B cell (primary cell): ENCODE measurements at regions of chr6 and their contacts with region 1.

Region 1: DNA sequence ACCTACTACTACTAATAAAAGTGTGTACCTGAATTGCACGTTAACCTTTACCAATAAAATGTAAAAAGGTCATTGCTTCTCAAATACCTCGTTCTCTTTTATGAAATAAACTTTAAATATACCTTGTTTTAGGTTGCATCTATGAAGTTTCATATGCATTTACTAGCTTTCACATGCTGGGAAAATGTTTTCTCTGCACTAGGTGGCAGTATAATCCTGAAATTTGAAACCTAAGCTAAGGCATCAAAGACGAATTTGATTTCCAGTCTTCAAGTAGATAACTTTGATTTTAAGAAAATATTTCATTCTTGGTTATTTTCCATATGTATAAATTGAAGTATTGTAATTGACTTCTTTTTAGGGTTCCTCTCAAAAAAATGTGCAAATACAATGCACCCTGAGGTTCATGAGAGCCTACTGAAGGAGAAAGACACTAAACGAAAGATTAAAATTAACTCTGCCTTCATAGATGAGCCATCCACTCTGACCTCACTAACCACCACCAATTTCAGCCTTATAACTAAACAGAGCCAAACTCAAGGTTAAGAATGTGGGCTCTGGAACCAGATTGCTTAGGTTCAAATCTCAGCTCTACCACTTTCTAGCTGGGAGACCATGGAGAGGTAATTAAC is 7.3 kb upstream of the COL9A1 start:
- DNase-seq: peak; percentile 38
- ATAC-seq: no peak
- H3K4me3 ChIP-seq: no peak overlapping the region
- H3K4me3 Mint-ChIP-seq: no peak overlapping the region
- H3K27ac ChIP-seq: no peak overlapping the region
- H3K27ac Mint-ChIP-seq: no peak overlapping the region
- H3K4me1 ChIP-seq: no peaks in the 10 kb centered on the region
- H3K4me1 Mint-ChIP-seq: no peaks in the 10 kb centered on the region
- H3K27me3 ChIP-seq: peaks cover 0 to 3% (median 0%) of the 10 kb centered on the region in 4 experiments
- H3K27me3 Mint-ChIP-seq: peaks cover 36% of the 10 kb centered on the region
- CTCF ChIP-seq: peak; percentile 77

Region 2: GRCh38 chr6:70258483-70258882 is 51.7 kb before region 1 on chr6:
- CTCF ChIA-PET with region 1: no interaction called
- POLR2A ChIA-PET with region 1: no interaction called
- intact Hi-C with region 1: no loop called
- DNase-seq: no peak
- ATAC-seq: no peak
- H3K4me3 ChIP-seq: no peak overlapping the region
- H3K4me3 Mint-ChIP-seq: no peak overlapping the region
- H3K27ac ChIP-seq: no peak overlapping the region
- H3K27ac Mint-ChIP-seq: no peak overlapping the region
- H3K4me1 ChIP-seq: no peaks in the 10 kb centered on the region
- H3K4me1 Mint-ChIP-seq: no peaks in the 10 kb centered on the region
- H3K27me3 ChIP-seq: peaks cover 0 to 7% (median 1%) of the 10 kb centered on the region in 4 experiments
- H3K27me3 Mint-ChIP-seq: peaks cover 16% of the 10 kb centered on the region
- CTCF ChIP-seq: no peak

Region 3: DNA sequence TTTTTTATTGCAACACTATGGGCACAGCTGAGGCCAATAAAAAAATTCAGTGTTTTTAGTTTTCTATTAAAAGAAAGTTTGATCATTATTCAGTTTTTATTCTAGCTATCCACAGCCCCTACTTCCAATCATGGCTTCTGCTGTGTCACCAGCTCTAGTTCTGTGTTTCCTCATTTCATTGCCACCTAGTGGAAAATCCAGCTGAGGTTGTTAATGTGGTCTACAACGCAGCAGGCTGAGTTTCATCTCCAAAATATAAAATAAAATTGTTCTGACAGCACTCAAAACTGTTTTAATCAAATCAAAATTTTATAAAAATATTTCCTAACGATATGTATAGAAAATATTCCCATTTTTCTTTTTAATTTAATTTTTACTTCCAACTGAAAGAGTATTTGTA is 20.9 kb before region 1 on chr6:
- CTCF ChIA-PET with region 1: interaction called, 10 read pairs
- POLR2A ChIA-PET with region 1: no interaction called
- intact Hi-C with region 1: no loop called
- DNase-seq: no peak
- ATAC-seq: no peak
- H3K4me3 ChIP-seq: no peak overlapping the region
- H3K4me3 Mint-ChIP-seq: no peak overlapping the region
- H3K27ac ChIP-seq: no peak overlapping the region
- H3K27ac Mint-ChIP-seq: no peak overlapping the region
- H3K4me1 ChIP-seq: no peaks in the 10 kb centered on the region
- H3K4me1 Mint-ChIP-seq: no peaks in the 10 kb centered on the region
- H3K27me3 ChIP-seq: no peaks in the 10 kb centered on the region
- H3K27me3 Mint-ChIP-seq: peaks cover 11% of the 10 kb centered on the region
- CTCF ChIP-seq: no peak

Region 4: DNA sequence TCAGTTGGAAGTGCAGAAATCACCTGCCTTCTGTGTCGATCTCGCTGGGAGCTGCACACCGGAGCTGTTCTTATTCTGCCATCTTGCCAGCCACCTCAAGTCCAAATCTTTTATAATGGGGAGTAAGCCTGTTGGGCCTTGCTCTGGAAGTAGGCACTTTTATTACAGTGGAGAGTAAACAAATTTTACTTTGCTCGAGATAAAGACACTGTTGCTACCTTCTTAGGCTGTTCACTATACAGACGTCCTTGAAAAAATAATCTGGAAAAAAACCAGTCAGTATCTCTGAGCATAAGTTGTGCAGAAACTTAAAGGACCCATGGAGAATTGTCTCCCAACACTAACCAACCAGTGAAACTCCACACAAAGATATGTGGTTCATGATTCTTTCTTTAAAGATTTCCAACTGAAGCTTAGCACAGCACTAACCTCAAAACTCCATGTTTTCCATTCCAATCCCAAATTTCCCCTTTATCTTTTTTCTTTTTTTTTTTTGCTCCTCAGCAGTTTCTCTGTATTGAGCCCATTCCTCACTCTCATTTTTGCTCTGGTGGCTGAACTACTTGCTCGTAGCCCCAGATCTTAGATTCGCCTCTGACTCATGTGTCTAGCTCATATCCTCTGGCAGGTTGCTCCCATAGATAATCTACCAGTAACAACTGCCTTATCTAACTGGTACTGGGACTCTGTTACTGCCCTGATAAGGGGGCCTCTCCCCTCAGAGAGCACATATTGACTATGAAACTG is 27.0 kb after region 1 on chr6:
- CTCF ChIA-PET with region 1: no interaction called
- POLR2A ChIA-PET with region 1: no interaction called
- intact Hi-C with region 1: no loop called
- DNase-seq: no peak
- ATAC-seq: no peak
- H3K4me3 ChIP-seq: no peak overlapping the region
- H3K4me3 Mint-ChIP-seq: no peak overlapping the region
- H3K27ac ChIP-seq: no peak overlapping the region
- H3K27ac Mint-ChIP-seq: no peak overlapping the region
- H3K4me1 ChIP-seq: no peaks in the 10 kb centered on the region
- H3K4me1 Mint-ChIP-seq: no peaks in the 10 kb centered on the region
- H3K27me3 ChIP-seq: peaks cover 0 to 5% (median 0%) of the 10 kb centered on the region in 4 experiments
- H3K27me3 Mint-ChIP-seq: peaks cover 26% of the 10 kb centered on the region
- CTCF ChIP-seq: no peak

Region 5: DNA sequence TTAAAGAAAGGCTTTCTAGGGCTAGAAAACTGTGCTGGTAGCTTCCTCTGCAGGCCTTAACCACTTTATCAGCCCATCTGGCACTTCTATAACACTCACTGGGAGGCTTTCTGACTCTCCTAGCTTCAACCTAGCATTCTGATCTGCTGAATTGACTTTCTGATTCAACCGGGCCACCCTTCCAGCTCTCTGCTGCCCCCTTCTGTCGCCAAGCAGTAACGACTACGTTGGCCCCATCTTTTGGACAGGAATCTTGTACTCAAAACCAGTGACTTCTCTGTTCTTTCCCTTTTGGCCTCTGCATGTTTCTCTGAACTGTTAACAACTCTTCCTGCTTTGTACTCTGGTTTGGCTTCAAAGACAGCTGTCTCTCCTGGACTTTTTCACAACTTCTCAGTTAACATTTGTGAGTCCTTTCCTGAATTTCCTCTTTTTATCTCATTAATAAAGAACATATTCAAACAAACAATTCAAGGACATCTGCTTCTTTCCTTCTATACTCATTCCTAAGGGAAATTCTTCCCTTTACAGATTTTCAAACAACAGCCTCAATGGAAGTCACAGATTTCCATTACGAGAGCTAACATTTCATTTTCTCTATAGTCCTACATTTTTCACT is 59.3 kb after region 1 on chr6:
- CTCF ChIA-PET with region 1: interaction called, 30 read pairs
- POLR2A ChIA-PET with region 1: no interaction called
- intact Hi-C with region 1: loop called (anchors 2 kb)
- DNase-seq: peak; percentile 73
- ATAC-seq: peak; percentile 78
- H3K4me3 ChIP-seq: no peak overlapping the region
- H3K4me3 Mint-ChIP-seq: no peak overlapping the region
- H3K27ac ChIP-seq: no peak overlapping the region
- H3K27ac Mint-ChIP-seq: no peak overlapping the region
- H3K4me1 ChIP-seq: no peaks in the 10 kb centered on the region
- H3K4me1 Mint-ChIP-seq: peaks cover 4% of the 10 kb centered on the region
- H3K27me3 ChIP-seq: peaks cover 0 to 2% (median 0%) of the 10 kb centered on the region in 4 experiments
- H3K27me3 Mint-ChIP-seq: peaks cover 32% of the 10 kb centered on the region
- CTCF ChIP-seq: peak; percentile 84

Region 6: GRCh38 chr6:70622461-70622860 is 312.3 kb after region 1 on chr6:
- CTCF ChIA-PET with region 1: no interaction called
- POLR2A ChIA-PET with region 1: no interaction called
- intact Hi-C with region 1: no loop called
- DNase-seq: no peak
- ATAC-seq: no peak
- H3K4me3 ChIP-seq: no peak overlapping the region
- H3K4me3 Mint-ChIP-seq: no peak overlapping the region
- H3K27ac ChIP-seq: no peak overlapping the region
- H3K27ac Mint-ChIP-seq: no peak overlapping the region
- H3K4me1 ChIP-seq: no peaks in the 10 kb centered on the region
- H3K4me1 Mint-ChIP-seq: no peaks in the 10 kb centered on the region
- H3K27me3 ChIP-seq: no peaks in the 10 kb centered on the region
- H3K27me3 Mint-ChIP-seq: no peaks in the 10 kb centered on the region
- CTCF ChIP-seq: no peak

Region 7: GRCh38 chr6:70955441-70956190 is 645.4 kb after region 1 on chr6:
- CTCF ChIA-PET with region 1: interaction called, 11 read pairs
- POLR2A ChIA-PET with region 1: no interaction called
- intact Hi-C with region 1: loop called (anchors 5 kb)
- DNase-seq: peak; percentile 85
- ATAC-seq: peak; percentile 95
- H3K4me3 ChIP-seq: peak overlapping the region in 4 of 5 experiments; percentile 36 to 66 (median 50)
- H3K4me3 Mint-ChIP-seq: peak overlapping the region; percentile 82
- H3K27ac ChIP-seq: no peak overlapping the region
- H3K27ac Mint-ChIP-seq: no peak overlapping the region
- H3K4me1 ChIP-seq: peaks cover 22 to 24% of the 10 kb centered on the region in 2 donors
- H3K4me1 Mint-ChIP-seq: peaks cover 26% of the 10 kb centered on the region
- H3K27me3 ChIP-seq: peaks cover 0 to 41% (median 19%) of the 10 kb centered on the region in 4 experiments
- H3K27me3 Mint-ChIP-seq: peaks cover 58% of the 10 kb centered on the region
- CTCF ChIP-seq: peak; percentile 85

Region 8: DNA sequence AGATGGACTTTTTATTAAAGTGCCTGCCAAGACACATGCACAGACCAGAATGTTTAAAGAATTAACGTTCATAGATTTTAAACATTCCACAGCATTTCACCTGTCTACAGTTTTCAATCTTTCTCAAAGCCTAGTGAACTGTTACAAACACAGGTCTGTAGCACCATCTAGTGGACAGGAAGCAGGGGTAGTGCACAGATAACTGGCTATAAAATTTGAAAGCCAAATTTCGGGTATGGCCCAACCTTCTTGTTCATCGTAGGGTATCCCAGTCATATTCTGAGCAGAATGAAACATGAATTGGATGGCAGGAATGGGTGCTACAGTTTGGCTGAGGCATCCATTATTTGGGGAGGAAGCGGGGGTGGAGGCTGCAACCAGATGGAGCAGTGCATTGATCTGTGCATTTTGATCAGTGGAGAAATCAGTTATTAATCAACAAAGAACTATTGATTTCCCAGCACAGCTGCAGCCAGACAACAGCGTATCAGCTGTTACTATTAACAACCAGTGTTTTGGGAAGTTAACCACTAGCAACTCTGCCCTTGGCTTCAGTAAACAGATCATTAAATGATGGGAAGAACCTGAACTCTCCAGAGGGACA is 702.8 kb after region 1 on chr6:
- CTCF ChIA-PET with region 1: interaction called, 11 read pairs
- POLR2A ChIA-PET with region 1: no interaction called
- intact Hi-C with region 1: loop called (anchors 2 kb)
- DNase-seq: peak; percentile 64
- ATAC-seq: no peak
- H3K4me3 ChIP-seq: no peak overlapping the region
- H3K4me3 Mint-ChIP-seq: no peak overlapping the region
- H3K27ac ChIP-seq: no peak overlapping the region
- H3K27ac Mint-ChIP-seq: no peak overlapping the region
- H3K4me1 ChIP-seq: peaks cover 0 to 3% of the 10 kb centered on the region in 2 donors
- H3K4me1 Mint-ChIP-seq: peaks cover 2% of the 10 kb centered on the region
- H3K27me3 ChIP-seq: peaks cover 0 to 13% (median 0%) of the 10 kb centered on the region in 4 experiments
- H3K27me3 Mint-ChIP-seq: peaks cover 14% of the 10 kb centered on the region
- CTCF ChIP-seq: peak; percentile 84